Sigmoid colon (tissue), 7 donors: ENCODE measurements at regions of chr3 and their contacts with region 1.

Region 1: DNA sequence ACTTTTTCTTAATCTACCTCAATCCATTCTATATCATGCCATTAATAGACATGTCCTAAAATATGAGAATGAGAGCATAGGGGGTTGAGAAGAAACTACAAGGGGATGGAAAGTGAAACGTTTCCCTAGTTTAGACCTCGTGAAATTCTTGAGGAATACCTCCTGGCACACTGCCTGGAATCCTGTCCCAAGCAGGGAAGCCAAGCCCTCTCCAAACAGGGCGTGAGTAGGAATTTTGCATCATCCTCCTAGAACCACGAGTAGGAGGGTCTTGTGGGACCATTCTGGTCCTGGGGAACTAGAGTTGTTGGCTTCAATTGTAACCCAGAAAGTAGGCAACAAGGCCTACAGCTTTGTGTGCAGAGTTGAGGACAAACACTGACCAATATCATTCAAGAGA is 19.6 kb upstream of the C3orf80 start:
- DNase-seq: no peak
- H3K4me3 ChIP-seq: no peak overlapping the region
- H3K27ac ChIP-seq: no peak overlapping the region
- H3K4me1 ChIP-seq: peaks cover 0 to 7% (median 0%) of the 10 kb centered on the region in 4 donors
- H3K27me3 ChIP-seq: no peaks in the 10 kb centered on the region
- CTCF ChIP-seq: no peak
- EP300 ChIP-seq: no peak
- POLR2A ChIP-seq: no peak

Region 2: DNA sequence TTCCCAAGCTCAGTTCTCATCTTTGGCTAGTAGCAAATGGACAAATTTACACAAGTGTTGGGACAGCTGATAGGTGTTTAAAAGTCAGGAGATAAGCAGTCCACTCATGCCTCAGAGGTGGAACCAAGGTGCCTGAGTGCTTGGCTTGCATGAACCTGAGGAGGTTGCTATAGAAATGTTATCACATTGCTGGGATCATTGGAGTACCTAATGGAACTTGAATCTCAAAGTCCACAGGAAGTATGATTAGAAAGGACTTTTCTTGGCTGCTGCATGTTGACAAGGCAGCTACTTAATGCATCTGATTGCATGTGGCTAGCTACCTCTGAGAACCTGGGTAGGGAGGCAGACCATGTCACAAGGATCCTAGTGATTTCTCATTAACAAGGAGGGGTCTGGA is 19.9 kb before region 1 on chr3:
- intact Hi-C with region 1: loop called (anchors 2 kb)
- DNase-seq: no peak
- H3K4me3 ChIP-seq: no peak overlapping the region
- H3K27ac ChIP-seq: peak overlapping the region in 1 of 4 donors; percentile 62
- H3K4me1 ChIP-seq: peaks cover 0 to 48% (median 33%) of the 10 kb centered on the region in 4 donors
- H3K27me3 ChIP-seq: no peaks in the 10 kb centered on the region
- CTCF ChIP-seq: no peak
- EP300 ChIP-seq: no peak
- POLR2A ChIP-seq: no peak